Activated CD4-positive, alpha-beta T cell treated with anti-CD3 and anti-CD28 coated beads, Interleukin-2, amount 10 ng/mL, durations not matched to agents 24 days and 14 days (primary cell): ENCODE measurements at regions of chr16 and their contacts with region 1.

Region 1: DNA sequence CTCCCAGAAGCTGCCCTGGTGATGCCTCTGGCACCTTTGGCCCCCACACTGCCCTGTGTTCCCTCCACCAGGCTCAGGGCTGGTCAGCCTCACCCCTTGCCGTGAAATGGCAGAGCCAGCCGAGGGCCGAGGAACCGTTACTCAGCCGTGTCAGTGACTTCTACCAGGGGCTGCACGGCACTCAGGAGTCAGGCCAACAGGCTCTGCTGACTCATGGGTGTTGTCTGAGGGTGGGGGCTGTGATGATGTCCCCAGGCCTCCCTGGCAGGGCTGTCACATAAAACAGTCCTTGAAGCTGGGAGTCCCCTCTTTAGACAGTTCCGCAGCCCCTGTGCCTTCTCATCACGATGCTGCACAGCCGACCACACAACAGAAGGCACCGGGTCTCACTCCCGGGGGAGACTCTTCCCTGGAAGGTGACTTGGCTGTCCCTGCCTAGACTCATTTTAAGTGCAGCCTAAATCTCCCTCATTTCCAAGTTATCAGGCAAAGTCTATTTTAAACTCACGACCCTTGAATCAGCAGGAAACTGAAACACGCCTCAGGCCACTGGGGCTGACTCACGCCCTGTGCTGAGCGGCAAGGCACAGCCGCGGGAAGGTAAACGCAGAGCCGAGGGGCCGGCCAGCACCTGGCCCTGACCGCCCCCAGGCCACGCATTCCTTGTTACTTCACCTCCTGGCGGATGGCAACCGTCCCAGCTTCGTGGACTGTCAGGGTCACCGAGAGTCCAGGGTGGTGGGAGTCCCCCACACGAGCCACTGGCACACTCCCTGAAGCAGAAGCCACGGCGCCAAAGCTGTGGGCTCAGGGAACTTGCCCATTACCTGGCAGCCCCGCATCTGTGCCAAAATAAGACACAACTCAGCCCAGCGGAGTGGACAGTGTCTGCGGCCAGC is 102.6 kb downstream of the ZNF778 start:
- DNase-seq: peak; percentile 77
- H3K4me3 Mint-ChIP-seq: peak overlapping the region; percentile 71
- H3K27ac Mint-ChIP-seq: peak overlapping the region; percentile 88
- H3K4me1 Mint-ChIP-seq: peaks cover 83% of the 10 kb centered on the region
- H3K27me3 Mint-ChIP-seq: no peaks in the 10 kb centered on the region

Region 2: DNA sequence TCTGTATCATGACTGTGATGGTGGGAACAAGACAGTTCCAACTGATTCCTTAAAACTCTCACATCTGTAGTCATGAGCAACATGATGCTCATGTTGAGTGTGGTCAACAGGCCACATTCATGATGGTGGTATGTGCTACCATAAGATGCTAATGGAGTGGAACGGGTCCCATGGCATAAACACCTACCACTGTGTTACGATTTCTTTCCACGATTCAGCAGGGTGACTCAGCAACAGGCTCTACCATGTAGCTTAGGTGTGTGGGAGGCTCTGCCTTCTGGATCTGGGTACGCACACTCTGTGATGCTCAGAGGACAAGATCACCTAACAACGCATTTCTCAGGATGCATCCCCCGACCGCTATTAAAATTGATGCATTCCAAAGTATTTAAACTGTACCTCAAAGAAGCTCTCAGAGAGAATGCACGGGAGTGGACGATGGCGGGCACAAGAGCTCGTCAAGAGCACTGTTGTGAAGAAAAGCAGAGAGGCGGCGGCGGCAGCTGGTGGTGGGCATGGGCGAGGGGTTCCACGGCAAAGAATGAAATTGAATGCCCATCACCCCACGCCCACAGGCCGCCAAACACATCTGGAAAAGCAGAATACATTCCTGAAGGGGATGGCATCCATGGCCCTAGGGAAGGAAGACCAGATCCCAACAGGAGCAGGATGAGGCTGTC is 30.7 kb after region 1 on chr16:
- intact Hi-C with region 1: loop called (anchors 1 kb)
- DNase-seq: peak; percentile 67
- H3K4me3 Mint-ChIP-seq: peak overlapping the region; percentile 71
- H3K27ac Mint-ChIP-seq: peak overlapping the region; percentile 84
- H3K4me1 Mint-ChIP-seq: peaks cover 71% of the 10 kb centered on the region
- H3K27me3 Mint-ChIP-seq: no peaks in the 10 kb centered on the region

Region 3: DNA sequence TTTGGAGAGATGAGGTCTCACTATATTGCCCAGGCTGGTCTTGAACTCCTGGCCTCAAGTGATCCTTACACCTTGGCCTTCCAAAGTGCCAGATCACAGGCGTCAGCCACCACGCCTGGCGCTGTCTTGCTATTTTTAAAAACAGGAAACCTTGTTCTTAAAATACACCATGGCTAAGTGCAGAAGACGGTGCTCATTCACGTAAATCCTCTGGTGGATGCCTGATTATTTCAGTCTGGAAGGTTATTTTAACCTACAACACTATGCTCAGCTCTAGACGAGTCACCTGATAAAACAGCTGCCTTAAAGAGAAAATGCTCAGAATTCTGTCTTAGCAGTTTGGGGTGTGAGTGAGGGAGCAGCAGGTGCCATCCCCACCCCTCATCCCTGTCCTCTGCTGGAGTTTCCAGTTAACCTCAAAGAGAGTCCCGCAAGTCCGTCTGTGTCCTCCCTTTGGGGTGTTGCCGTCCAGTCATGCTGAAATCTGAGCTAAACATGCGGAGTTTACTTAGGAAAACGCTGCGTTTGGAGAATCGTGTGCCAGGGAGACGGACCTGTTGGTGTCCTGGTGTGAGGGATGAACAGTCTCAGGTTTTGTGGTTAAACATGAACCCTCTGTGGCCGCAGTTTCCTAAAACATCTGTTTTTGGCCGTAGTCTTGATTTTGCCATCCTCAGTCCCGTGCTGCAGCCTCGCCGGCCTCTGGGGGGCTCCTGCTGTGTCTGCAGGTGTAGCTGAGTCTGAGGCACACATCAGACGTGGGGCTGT is 205.2 kb after region 1 on chr16:
- intact Hi-C with region 1: no loop called
- DNase-seq: no peak
- H3K4me3 Mint-ChIP-seq: no peak overlapping the region
- H3K27ac Mint-ChIP-seq: no peak overlapping the region
- H3K4me1 Mint-ChIP-seq: peaks cover 2% of the 10 kb centered on the region
- H3K27me3 Mint-ChIP-seq: no peaks in the 10 kb centered on the region